ENCODE measurements at regions of chr6 and their contacts with region 1.

Region 1: DNA sequence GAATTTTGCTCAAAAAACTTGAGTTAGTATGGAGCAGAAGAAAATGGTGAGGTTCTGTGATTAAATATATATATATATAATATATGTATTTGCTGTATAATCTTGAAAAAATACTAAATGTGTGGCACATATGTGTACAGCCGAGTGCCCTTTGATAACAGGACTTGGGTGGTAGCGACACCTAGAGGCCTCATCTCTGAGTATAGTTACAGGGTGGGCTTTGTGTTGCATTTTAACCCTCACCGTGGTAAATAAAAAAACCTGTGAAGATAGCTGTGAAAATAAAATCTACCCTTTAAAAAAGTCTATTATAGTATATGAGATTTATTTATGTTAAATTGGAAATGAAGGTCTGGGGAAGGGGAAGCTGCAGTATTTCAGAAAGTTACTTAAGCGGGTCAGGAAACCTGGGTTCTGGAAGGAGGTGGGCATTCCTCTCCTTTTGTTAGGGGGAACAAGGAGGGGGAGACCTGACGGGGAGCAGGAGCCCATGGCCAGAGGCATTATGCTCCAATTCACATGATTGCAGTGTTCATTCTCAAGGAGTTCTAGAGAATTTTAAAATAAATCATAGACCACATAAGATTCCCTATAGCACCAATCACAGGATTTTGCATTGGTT is 82.7 kb downstream of the SH3BGRL2 start:
- DNase-seq: peak; percentile 46 to 67
- H3K4me3 ChIP-seq: no peak overlapping the region
- H3K4me3 Mint-ChIP-seq: no peak overlapping the region
- H3K27ac Mint-ChIP-seq: no peak overlapping the region
- H3K4me1 ChIP-seq: peaks cover 11% of the 10 kb centered on the region
- H3K4me1 Mint-ChIP-seq: peaks cover 24% of the 10 kb centered on the region
- H3K27me3 ChIP-seq: no peaks in the 10 kb centered on the region
- H3K27me3 Mint-ChIP-seq: no peaks in the 10 kb centered on the region
- CTCF ChIP-seq: peak; percentile 72 to 80

Region 2: DNA sequence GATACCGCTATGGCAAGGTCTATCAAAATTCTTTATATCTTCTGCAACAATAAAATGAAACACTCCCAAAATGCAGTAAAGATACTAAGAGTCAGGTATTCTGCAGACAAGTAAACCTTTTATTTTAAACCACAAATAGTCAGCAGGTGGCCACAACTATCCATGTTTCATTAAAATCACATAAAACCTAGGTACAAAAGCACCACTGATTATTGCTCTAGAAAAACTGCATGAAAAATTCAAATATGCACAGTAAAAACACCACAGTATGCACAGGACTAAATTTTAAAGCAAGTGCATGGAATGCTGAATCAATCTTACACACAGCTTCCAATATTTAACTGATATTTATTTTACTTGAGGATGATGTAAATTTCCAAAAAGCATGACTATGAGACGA is 512.7 kb before region 1 on chr6:
- CTCF ChIA-PET with region 1: no interaction called
- POLR2A ChIA-PET with region 1: no interaction called
- intact Hi-C with region 1: loop called (anchors 10 kb)
- DNase-seq: no peak
- H3K4me3 ChIP-seq: no peak overlapping the region
- H3K4me3 Mint-ChIP-seq: no peak overlapping the region
- H3K27ac Mint-ChIP-seq: no peak overlapping the region
- H3K4me1 ChIP-seq: no peaks in the 10 kb centered on the region
- H3K4me1 Mint-ChIP-seq: peaks cover 17% of the 10 kb centered on the region
- H3K27me3 ChIP-seq: no peaks in the 10 kb centered on the region
- H3K27me3 Mint-ChIP-seq: no peaks in the 10 kb centered on the region
- CTCF ChIP-seq: no peak

Region 3: GRCh38 chr6:79431537-79431933 is 282.3 kb before region 1 on chr6:
- CTCF ChIA-PET with region 1: interaction called, 3 read pairs
- POLR2A ChIA-PET with region 1: no interaction called
- intact Hi-C with region 1: loop called (anchors 1 kb)
- DNase-seq: peak; percentile 61 to 69
- H3K4me3 ChIP-seq: no peak overlapping the region
- H3K4me3 Mint-ChIP-seq: peak overlapping the region; percentile 10
- H3K27ac Mint-ChIP-seq: peak overlapping the region; percentile 41
- H3K4me1 ChIP-seq: peaks cover 37% of the 10 kb centered on the region
- H3K4me1 Mint-ChIP-seq: peaks cover 24% of the 10 kb centered on the region
- H3K27me3 ChIP-seq: no peaks in the 10 kb centered on the region
- H3K27me3 Mint-ChIP-seq: no peaks in the 10 kb centered on the region
- CTCF ChIP-seq: peak; percentile 62 to 67

Region 4: GRCh38 chr6:79564636-79565035 is 149.2 kb before region 1 on chr6:
- CTCF ChIA-PET with region 1: no interaction called
- POLR2A ChIA-PET with region 1: no interaction called
- intact Hi-C with region 1: no loop called
- DNase-seq: no peak
- H3K4me3 ChIP-seq: no peak overlapping the region
- H3K4me3 Mint-ChIP-seq: no peak overlapping the region
- H3K27ac Mint-ChIP-seq: no peak overlapping the region
- H3K4me1 ChIP-seq: peaks cover 27% of the 10 kb centered on the region
- H3K4me1 Mint-ChIP-seq: peaks cover 25% of the 10 kb centered on the region
- H3K27me3 ChIP-seq: no peaks in the 10 kb centered on the region
- H3K27me3 Mint-ChIP-seq: no peaks in the 10 kb centered on the region
- CTCF ChIP-seq: no peak

Region 5: DNA sequence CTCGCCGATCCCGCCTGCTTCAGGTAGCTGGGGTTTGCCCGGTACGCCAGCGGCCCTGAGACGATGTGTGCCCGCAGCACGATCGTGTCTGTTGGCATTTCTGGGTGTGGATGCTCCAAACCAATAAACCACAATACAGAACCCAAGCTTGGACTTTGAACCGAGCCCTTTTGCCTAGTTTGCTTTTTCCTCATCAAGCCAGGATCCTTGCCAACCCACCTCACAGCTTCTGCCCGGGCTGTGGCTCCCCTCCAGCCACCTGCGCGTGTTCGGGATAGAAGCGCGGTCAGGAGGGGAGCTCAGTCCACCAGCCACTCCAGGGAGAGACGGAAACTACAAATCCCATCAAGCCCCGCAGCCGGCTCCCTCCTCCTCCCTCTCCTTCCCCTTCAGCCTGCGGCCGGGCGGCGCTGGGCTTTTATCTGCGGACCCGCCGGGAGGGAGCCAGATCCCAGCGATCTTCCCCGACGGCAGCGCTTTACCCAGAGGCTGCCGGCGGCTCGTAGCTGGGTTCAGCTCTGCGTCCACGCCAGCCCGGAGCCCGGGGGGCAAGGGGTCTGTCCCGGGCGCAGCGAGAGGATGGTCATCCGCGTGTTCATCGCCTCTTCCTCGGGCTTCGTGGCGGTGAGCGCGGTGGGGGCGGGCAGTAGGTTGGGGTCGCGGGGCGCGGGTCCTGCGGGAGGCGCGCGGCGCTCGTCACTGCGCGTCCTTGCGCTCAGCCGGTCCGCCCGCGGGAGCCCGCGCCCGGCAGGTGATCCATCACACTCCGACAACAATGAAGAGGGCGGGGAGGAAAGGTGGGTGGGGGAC is 82.7 kb before region 1 on chr6 and contains the start of gene SH3BGRL2:
- CTCF ChIA-PET with region 1: no interaction called
- POLR2A ChIA-PET with region 1: no interaction called
- intact Hi-C with region 1: loop called (anchors 2 kb)
- DNase-seq: peak; percentile 88 to 89
- H3K4me3 ChIP-seq: peak within 1 kb of the TSS; percentile 90
- H3K4me3 Mint-ChIP-seq: peak within 1 kb of the TSS; percentile 95
- H3K27ac Mint-ChIP-seq: peak within 1 kb of the TSS; percentile 94
- H3K4me1 ChIP-seq: peaks cover 32% of the 10 kb centered on the region
- H3K4me1 Mint-ChIP-seq: peaks cover 27% of the 10 kb centered on the region
- H3K27me3 ChIP-seq: no peaks in the 10 kb centered on the region
- H3K27me3 Mint-ChIP-seq: no peaks in the 10 kb centered on the region
- CTCF ChIP-seq: no peak
- total RNA-seq, gene SH3BGRL2: 102 and 106 TPM in 2 replicates

Region 6: DNA sequence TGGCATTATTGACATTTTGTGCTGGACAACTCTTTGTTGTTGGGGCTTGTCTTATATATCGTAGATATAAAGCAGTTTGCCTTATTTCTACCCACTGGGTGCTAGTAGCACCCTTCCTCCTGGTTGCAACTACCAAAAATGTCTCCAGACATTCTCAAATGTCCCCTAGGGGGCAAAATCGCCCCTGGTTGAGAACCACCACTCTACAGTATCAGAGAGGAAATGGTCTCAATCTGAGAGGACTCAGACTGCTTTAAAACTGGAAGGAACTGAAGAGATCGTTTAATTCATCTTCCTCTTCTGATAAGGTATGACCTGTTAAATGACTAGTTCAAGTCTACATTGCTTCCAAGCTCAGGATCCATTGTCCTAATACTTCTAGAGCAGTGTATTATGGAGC is 67.8 kb before region 1 on chr6:
- CTCF ChIA-PET with region 1: no interaction called
- POLR2A ChIA-PET with region 1: no interaction called
- intact Hi-C with region 1: loop called (anchors 2 kb)
- DNase-seq: peak in 1 of 2 experiments; percentile 38
- H3K4me3 ChIP-seq: no peak overlapping the region
- H3K4me3 Mint-ChIP-seq: no peak overlapping the region
- H3K27ac Mint-ChIP-seq: no peak overlapping the region
- H3K4me1 ChIP-seq: peaks cover 19% of the 10 kb centered on the region
- H3K4me1 Mint-ChIP-seq: peaks cover 57% of the 10 kb centered on the region
- H3K27me3 ChIP-seq: no peaks in the 10 kb centered on the region
- H3K27me3 Mint-ChIP-seq: no peaks in the 10 kb centered on the region
- CTCF ChIP-seq: peak; percentile 33 to 40

Region 7: GRCh38 chr6:79869600-79870084 is 155.8 kb after region 1 on chr6:
- CTCF ChIA-PET with region 1: no interaction called
- POLR2A ChIA-PET with region 1: no interaction called
- intact Hi-C with region 1: loop called (anchors 5 kb)
- DNase-seq: peak; percentile 80 to 88
- H3K4me3 ChIP-seq: 0 out of 2 replicates have a peak overlapping the region, but pooled peaks have one; percentile 4
- H3K4me3 Mint-ChIP-seq: peak overlapping the region; percentile 42
- H3K27ac Mint-ChIP-seq: no peak overlapping the region
- H3K4me1 ChIP-seq: no peaks in the 10 kb centered on the region; the same call in 1 of the 2 replicates
- H3K4me1 Mint-ChIP-seq: peaks cover 25% of the 10 kb centered on the region
- H3K27me3 ChIP-seq: no peaks in the 10 kb centered on the region
- H3K27me3 Mint-ChIP-seq: no peaks in the 10 kb centered on the region
- CTCF ChIP-seq: peak; percentile 86 to 95

Region 8: GRCh38 chr6:79913369-79913768 is 199.6 kb after region 1 on chr6:
- CTCF ChIA-PET with region 1: no interaction called
- POLR2A ChIA-PET with region 1: no interaction called
- intact Hi-C with region 1: no loop called
- DNase-seq: no peak
- H3K4me3 ChIP-seq: no peak overlapping the region
- H3K4me3 Mint-ChIP-seq: no peak overlapping the region
- H3K27ac Mint-ChIP-seq: no peak overlapping the region
- H3K4me1 ChIP-seq: no peaks in the 10 kb centered on the region
- H3K4me1 Mint-ChIP-seq: no peaks in the 10 kb centered on the region
- H3K27me3 ChIP-seq: no peaks in the 10 kb centered on the region; the same call in 1 of the 2 replicates
- H3K27me3 Mint-ChIP-seq: peaks cover 10% of the 10 kb centered on the region
- CTCF ChIP-seq: no peak